Ovary (tissue), 10 donors: ENCODE measurements at regions of chr10 and their contacts with region 1.

Region 1: DNA sequence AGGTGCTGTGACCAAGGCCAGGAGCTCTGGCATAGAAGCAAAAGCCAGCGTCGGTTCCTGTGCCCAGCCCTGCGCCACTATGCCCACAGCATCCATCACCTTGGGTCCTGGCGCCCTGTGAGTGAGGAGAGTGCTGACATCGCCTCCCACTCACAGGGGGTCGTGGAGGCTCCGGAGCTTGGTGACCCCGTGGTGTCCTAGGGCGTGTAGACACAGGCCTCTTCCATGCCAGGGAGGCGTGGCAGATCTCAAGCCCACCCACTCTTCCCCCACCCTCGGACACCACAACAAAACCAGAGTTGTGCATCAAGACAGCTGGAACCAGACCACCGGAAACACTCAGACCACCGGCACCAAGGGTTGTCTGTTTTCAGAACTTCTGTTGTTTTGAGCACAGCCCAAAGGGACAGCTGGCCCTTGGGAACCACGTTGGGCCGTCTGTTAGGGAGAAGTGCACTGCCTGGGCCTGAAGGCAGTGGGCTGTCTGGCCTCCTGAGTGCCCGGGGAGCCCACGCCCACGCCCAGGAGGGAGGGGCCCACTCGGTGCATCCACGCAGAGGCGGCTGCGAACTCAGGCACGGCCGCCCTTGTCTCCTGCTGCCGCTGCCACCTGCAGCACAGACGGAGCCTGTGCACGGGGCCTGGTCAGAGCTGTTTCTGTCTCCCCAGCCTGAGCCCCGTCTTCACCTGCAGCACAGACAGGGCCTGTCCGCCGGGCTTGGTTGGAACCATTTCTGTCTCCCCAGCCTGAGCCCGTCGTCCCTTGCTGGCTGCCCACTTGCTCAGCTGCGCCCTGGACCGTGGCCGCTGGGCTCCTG is 106.3 kb downstream of the INPP5A start:
- DNase-seq: peak in 1 of 5 donors; percentile 31
- H3K4me3 ChIP-seq: no peak overlapping the region
- H3K27ac ChIP-seq: no peak overlapping the region
- H3K4me1 ChIP-seq: peaks cover 2% of the 10 kb centered on the region
- H3K27me3 ChIP-seq: no peaks in the 10 kb centered on the region
- CTCF ChIP-seq: no peak
- EP300 ChIP-seq: no peak
- POLR2A ChIP-seq: no peak

Region 2: DNA sequence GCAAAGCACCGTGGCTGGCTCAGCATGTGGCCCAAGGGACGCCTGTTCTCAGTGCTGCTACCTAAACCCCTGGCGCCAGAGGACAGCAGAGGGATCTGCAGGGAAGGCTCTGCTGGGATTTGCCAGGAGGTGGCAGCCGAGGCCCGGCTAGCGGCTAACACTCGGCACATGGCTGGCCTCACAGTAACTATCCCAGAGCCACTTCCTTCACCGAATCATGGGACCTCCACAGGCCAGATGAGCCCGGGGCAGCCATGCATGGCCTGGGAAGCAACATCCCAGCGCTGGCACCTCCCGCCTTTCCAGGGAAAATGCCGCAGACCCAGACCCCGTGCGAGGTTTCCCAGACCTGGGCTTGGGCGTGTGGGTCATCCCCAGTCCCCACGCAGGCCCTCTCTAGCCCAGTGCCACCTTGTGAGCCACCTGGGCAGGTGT is 420.7 kb before region 1 on chr10:
- intact Hi-C with region 1: loop called in 2 of 4 experiments (anchors 5 to 10 kb)
- DNase-seq: peak; percentile 68 to 85 (median 81)
- H3K4me3 ChIP-seq: no peak overlapping the region
- H3K27ac ChIP-seq: no peak overlapping the region
- H3K4me1 ChIP-seq: no peaks in the 10 kb centered on the region
- H3K27me3 ChIP-seq: no peaks in the 10 kb centered on the region
- CTCF ChIP-seq: peak; percentile 82 to 91 (median 84)
- EP300 ChIP-seq: no peak
- POLR2A ChIP-seq: no peak

Region 3: GRCh38 chr10:132382231-132382922 is 261.5 kb before region 1 on chr10:
- intact Hi-C with region 1: loop called in 2 of 4 experiments (anchors 5 to 10 kb)
- DNase-seq: no peak
- H3K4me3 ChIP-seq: no peak overlapping the region
- H3K27ac ChIP-seq: no peak overlapping the region
- H3K4me1 ChIP-seq: no peaks in the 10 kb centered on the region
- H3K27me3 ChIP-seq: no peaks in the 10 kb centered on the region
- CTCF ChIP-seq: no peak
- EP300 ChIP-seq: no peak
- POLR2A ChIP-seq: no peak

Region 4: GRCh38 chr10:132387764-132388210 is 256.1 kb before region 1 on chr10:
- intact Hi-C with region 1: loop called in 3 of 4 experiments (anchors 5 to 10 kb)
- DNase-seq: peak; percentile 79 to 90 (median 88)
- H3K4me3 ChIP-seq: no peak overlapping the region
- H3K27ac ChIP-seq: peak overlapping the region; percentile 37 to 64
- H3K4me1 ChIP-seq: peaks cover 13% of the 10 kb centered on the region
- H3K27me3 ChIP-seq: no peaks in the 10 kb centered on the region
- CTCF ChIP-seq: peak; percentile 47 to 82 (median 65)
- EP300 ChIP-seq: no peak
- POLR2A ChIP-seq: no peak

Region 5: DNA sequence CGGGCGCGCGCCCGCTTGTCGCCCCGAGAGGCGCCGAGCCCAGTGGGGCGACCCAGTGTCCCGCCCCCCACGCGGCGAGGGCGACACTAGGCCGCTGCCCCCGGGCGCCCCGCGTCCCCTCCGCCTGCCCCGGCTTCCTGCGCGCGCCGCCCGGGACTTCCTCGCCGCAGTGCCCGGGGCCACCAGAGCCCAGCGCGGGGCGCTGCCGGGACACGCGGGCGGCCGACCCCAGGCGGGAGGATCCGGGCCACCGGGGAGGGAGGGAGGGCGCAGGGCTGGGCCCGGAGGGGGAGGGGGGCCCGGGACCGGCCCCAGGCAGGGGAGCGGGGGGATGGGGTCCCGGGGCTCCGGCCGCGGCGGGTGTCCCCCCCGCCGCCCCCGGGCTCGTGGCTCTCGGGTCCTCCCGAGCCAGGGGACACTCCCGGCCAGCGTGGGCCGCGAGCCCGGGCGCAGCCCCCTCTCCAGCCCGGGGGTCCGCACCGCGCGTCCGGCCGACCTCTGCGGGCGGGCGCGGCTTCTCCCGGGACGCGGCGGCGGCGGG is 247.4 kb before region 1 on chr10:
- intact Hi-C with region 1: loop called in 1 of 4 experiments (anchors 10 kb)
- DNase-seq: peak; percentile 68 to 81 (median 74)
- H3K4me3 ChIP-seq: peak overlapping the region; percentile 74
- H3K27ac ChIP-seq: peak overlapping the region; percentile 97 to 98
- H3K4me1 ChIP-seq: peaks cover 11% of the 10 kb centered on the region
- H3K27me3 ChIP-seq: no peaks in the 10 kb centered on the region
- CTCF ChIP-seq: peak in 2 of 3 donors; percentile 52 to 56
- EP300 ChIP-seq: no peak
- POLR2A ChIP-seq: no peak

Region 6: GRCh38 chr10:132546567-132547405 is 97.1 kb before region 1 on chr10:
- intact Hi-C with region 1: loop called in 1 of 4 experiments (anchors 5 kb)
- DNase-seq: peak in 3 of 5 donors; percentile 19 to 39 (median 26)
- H3K4me3 ChIP-seq: no peak overlapping the region
- H3K27ac ChIP-seq: no peak overlapping the region
- H3K4me1 ChIP-seq: peaks cover 26% of the 10 kb centered on the region
- H3K27me3 ChIP-seq: no peaks in the 10 kb centered on the region
- CTCF ChIP-seq: no peak
- EP300 ChIP-seq: no peak
- POLR2A ChIP-seq: no peak